Activated CD4-positive, alpha-beta T cell treated with anti-CD3 and anti-CD28 coated beads for 36 hours (primary cell): ENCODE measurements at regions of chr2 and their contacts with region 1.

Region 1: GRCh38 chr2:152606941-152607340 is 110.3 kb downstream of the PRPF40A start:
- DNase-seq: no peak
- ATAC-seq: no peak
- H3K4me3 Mint-ChIP-seq: no peak overlapping the region
- H3K27ac Mint-ChIP-seq: no peak overlapping the region
- H3K4me1 Mint-ChIP-seq: peaks cover 8% of the 10 kb centered on the region
- H3K27me3 Mint-ChIP-seq: no peaks in the 10 kb centered on the region

Region 2: GRCh38 chr2:151878655-151879563 is 728.0 kb before region 1 on chr2:
- CTCF ChIA-PET with region 1: no interaction called
- POLR2A ChIA-PET with region 1: no interaction called
- intact Hi-C with region 1: no loop called
- DNase-seq: no peak
- ATAC-seq: peak; percentile 64
- H3K4me3 Mint-ChIP-seq: no peak overlapping the region
- H3K27ac Mint-ChIP-seq: peak overlapping the region; percentile 29
- H3K4me1 Mint-ChIP-seq: peaks cover 9% of the 10 kb centered on the region
- H3K27me3 Mint-ChIP-seq: peaks cover 1% of the 10 kb centered on the region

Region 3: DNA sequence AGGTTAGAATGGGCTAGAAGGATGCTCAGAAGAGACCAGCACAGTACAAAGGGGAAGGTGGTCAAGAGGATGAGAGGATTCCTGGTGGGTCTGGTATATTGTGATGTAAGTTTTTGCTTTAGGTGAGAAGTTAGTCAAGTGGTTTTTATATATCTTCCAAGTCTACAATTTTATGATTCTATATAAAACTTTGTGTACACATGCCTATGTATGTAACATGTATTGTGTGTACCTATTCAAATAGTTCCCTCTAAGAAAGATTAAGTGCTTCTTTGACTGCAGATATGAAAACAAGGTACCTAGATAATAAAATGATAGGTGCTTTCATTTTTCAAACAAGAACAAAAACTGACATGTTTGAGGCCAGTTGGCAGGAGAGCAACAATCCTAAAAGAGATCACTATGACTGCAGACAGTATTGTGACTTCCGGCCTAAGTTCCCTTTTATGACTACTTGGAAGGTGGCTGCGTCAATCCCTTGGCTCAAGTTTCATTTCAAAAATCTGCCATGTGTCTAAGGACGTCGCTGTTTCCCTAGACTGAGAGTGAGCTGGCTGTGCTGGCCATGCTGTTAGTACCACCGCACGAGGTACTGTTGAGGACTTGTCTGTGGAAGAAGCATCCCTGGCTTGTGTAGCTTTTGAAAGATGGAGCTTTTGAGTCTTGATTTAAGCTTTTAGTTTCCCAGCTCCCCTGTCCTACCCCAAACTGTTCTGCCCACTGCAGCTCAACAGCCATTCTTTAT is 12.7 kb before region 1 on chr2:
- CTCF ChIA-PET with region 1: interaction called, 6 read pairs
- POLR2A ChIA-PET with region 1: interaction called, 11 read pairs
- intact Hi-C with region 1: no loop called
- DNase-seq: peak; percentile 25
- ATAC-seq: peak; percentile 93
- H3K4me3 Mint-ChIP-seq: no peak overlapping the region
- H3K27ac Mint-ChIP-seq: no peak overlapping the region
- H3K4me1 Mint-ChIP-seq: peaks cover 10% of the 10 kb centered on the region
- H3K27me3 Mint-ChIP-seq: peaks cover 2% of the 10 kb centered on the region